AG04450 (cell line): ENCODE measurements at regions of chr19 and their contacts with region 1.

Region 1: GRCh38 chr19:5782945-5783934 is 1.3 kb downstream of the PRR22 start:
- DNase-seq: no peak
- H3K4me3 ChIP-seq: no peak overlapping the region
- H3K27ac ChIP-seq: no peak overlapping the region
- H3K27me3 ChIP-seq: no peaks in the 10 kb centered on the region
- CTCF ChIP-seq: no peak

Region 2: GRCh38 chr19:5727453-5728050 is 55.7 kb before region 1 on chr19:
- CTCF ChIA-PET with region 1: no interaction called
- POLR2A ChIA-PET with region 1: interaction called, 10 read pairs
- DNase-seq: no peak
- H3K4me3 ChIP-seq: no peak overlapping the region
- H3K27ac ChIP-seq: no peak overlapping the region
- H3K27me3 ChIP-seq: no peaks in the 10 kb centered on the region
- CTCF ChIP-seq: no peak